ENCODE measurements at regions of chr6 and their contacts with region 1.

Region 1: DNA sequence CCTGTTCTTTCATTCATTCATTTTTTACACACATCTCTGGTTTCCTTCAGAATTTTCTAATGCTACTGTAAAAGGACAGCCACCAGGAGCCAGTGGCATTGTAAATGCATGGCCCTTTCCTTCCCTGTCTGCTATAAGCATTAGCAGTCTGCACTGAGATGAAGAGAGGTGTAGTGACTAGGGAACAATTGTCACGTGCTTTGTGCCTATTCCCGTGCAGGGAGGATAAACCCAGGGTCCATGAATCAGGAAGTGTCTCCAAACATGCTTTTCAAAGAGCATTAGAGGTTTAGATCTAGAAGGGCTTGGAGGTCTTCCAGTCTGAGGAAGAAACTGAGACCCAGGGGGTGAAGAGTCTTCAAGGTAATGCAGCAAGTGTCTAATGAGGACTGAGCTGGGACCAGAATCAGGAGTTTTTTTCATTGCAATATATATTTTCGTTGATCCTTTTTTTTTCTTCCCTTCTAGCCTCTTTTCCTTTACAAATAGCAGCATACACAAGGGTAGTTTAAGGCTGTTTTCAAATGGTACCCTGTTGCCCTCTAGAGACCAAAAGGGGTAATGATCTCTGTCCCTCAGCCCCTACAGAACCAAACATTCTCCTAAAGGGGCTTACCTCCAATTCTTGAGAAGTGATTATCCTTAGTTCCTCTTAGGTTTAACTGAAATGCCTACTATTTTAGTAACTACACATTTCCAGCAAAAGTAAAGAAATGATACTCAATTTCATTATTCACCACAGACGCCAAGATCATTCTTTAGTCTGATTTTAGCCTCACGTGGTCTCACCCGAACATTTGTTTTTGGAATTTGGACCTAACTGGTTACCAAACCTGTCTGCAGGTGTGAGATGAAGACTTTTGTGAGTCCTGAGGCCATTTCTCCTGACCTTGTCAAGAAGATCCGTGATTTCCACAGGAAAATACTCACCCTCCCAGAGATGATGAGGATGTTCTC is 6.6 kb downstream of the TRIM15 start:
- DNase-seq: no peak
- H3K4me3 Mint-ChIP-seq: no peak overlapping the region
- H3K27ac Mint-ChIP-seq: no peak overlapping the region
- H3K4me1 Mint-ChIP-seq: peaks cover 26% of the 10 kb centered on the region
- H3K27me3 Mint-ChIP-seq: peaks cover 35% of the 10 kb centered on the region

Region 2: DNA sequence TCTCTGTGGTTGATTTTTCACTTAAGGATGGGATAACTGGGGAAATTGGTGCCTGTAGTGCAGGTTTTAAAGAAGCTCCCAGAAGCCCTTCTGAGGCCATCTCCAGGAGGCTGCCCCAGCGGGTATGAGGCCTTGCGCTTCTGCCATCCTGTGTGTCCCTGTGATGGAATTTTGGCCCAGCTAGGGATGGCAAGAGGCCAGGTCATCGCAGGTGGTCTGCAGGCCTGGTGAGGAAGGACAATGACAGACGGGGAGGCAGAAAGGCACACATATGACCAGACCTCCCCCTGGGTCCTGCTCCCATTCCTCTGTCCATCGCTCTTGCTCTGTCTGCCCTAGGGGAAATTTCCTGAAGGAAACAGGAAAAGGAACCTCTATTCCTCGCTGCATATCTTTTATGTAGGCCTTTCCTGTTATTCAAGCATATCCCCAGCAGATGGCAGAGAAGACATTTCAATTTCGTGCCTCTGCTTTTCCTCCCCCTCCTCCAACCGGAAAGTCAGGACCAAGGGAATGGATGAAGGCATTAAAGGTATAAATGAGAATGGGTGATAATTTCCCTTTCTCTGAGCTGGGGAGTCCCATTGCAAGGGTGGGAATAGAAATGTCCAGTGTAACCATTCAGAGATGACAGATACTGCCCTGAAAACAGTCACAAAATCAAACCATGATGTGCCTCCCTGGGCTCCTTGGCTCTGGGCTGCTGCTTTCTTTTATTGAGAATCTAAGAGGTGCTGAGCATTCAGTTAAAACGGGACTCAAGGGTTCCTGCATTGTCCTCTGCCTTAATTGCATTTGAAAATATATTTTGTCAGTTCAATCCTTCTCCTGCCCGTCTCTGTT is 464.3 kb before region 1 on chr6:
- CTCF ChIA-PET with region 1: no interaction called
- POLR2A ChIA-PET with region 1: no interaction called
- intact Hi-C with region 1: no loop called
- DNase-seq: no peak
- H3K4me3 Mint-ChIP-seq: peak overlapping the region; percentile 6
- H3K27ac Mint-ChIP-seq: no peak overlapping the region
- H3K4me1 Mint-ChIP-seq: peaks cover 50% of the 10 kb centered on the region
- H3K27me3 Mint-ChIP-seq: peaks cover 13% of the 10 kb centered on the region

Region 3: GRCh38 chr6:30154709-30155519 is 15.0 kb before region 1 on chr6:
- CTCF ChIA-PET with region 1: interaction called, 7 read pairs
- POLR2A ChIA-PET with region 1: no interaction called
- intact Hi-C with region 1: loop called (anchors 1 kb)
- DNase-seq: no peak
- H3K4me3 Mint-ChIP-seq: no peak overlapping the region
- H3K27ac Mint-ChIP-seq: no peak overlapping the region
- H3K4me1 Mint-ChIP-seq: peaks cover 22% of the 10 kb centered on the region
- H3K27me3 Mint-ChIP-seq: peaks cover 20% of the 10 kb centered on the region

Measured in activated CD4-positive, alpha-beta memory T cell treated with anti-CD3 and anti-CD28 coated beads for 36 hours (primary cell).